ENCODE measurements at regions of chr10 and their contacts with region 1.

Region 1: DNA sequence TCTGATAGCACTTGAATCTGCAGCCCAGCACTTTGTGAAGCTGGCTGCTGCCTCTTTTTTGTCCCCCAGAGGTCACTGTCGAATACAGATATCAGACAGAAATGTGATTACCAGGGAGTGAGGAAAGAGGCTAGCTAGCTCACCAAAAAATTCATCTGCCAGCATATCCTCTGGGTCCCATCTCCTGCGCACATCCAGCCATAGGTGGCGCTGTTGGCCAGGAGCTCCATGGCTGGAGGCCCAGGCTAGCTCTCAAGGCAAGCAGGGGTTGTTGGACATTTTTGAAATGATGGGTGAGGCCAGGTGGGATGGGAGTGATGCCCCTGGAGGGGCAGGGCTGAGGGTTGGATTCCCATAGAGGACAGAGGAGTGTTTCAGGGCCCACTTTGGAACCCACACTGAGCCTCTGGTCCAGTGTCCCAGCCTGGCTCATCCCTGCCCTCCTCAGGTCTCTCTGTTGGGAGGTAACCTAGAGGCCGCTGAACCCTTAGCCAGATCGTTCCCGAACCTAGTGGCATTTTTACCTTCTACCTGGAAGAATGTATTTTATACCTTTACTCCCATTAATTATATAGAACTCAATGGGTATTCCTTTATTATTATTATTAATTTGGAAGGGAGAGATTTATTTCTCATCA is 14.8 kb downstream of the DPCD start:
- DNase-seq: peak; percentile 65
- H3K4me3 ChIP-seq: no peak overlapping the region
- H3K27ac ChIP-seq: no peak overlapping the region
- H3K4me1 ChIP-seq: peaks cover 16% of the 10 kb centered on the region
- H3K27me3 ChIP-seq: no peaks in the 10 kb centered on the region
- CTCF ChIP-seq: peak; percentile 91

Region 2: GRCh38 chr10:101655570-101655969 is 52.7 kb after region 1 on chr10:
- intact Hi-C with region 1: no loop called
- DNase-seq: peak; percentile 25
- H3K4me3 ChIP-seq: no peak overlapping the region
- H3K27ac ChIP-seq: no peak overlapping the region
- H3K4me1 ChIP-seq: peaks cover 18% of the 10 kb centered on the region
- H3K27me3 ChIP-seq: no peaks in the 10 kb centered on the region
- CTCF ChIP-seq: no peak

Region 3: GRCh38 chr10:101782811-101783735 is 180.2 kb after region 1 on chr10 and contains the start of gene NPM3:
- intact Hi-C with region 1: loop called (anchors 5 kb)
- DNase-seq: peak; percentile 79
- H3K4me3 ChIP-seq: peak within 1 kb of the TSS; percentile 72
- H3K27ac ChIP-seq: peak within 1 kb of the TSS; percentile 36
- H3K4me1 ChIP-seq: peaks cover 56% of the 10 kb centered on the region
- H3K27me3 ChIP-seq: peaks cover 17% of the 10 kb centered on the region
- CTCF ChIP-seq: no peak
- total RNA-seq, gene NPM3: 7.9 TPM

Measured in left ventricle myocardium inferior (tissue), 1 donor.